Right cardiac atrium (tissue), 5 donors: ENCODE measurements at regions of chr7 and their contacts with region 1.

Region 1: GRCh38 chr7:73612598-73613269 is 11.6 kb downstream of the MLXIPL start:
- DNase-seq: no peak
- ATAC-seq: peak in 1 of 2 donors; percentile 49
- H3K4me3 ChIP-seq: no peak overlapping the region
- H3K27ac ChIP-seq: no peak overlapping the region
- H3K4me1 ChIP-seq: no peaks in the 10 kb centered on the region
- H3K27me3 ChIP-seq: no peaks in the 10 kb centered on the region

Region 2: DNA sequence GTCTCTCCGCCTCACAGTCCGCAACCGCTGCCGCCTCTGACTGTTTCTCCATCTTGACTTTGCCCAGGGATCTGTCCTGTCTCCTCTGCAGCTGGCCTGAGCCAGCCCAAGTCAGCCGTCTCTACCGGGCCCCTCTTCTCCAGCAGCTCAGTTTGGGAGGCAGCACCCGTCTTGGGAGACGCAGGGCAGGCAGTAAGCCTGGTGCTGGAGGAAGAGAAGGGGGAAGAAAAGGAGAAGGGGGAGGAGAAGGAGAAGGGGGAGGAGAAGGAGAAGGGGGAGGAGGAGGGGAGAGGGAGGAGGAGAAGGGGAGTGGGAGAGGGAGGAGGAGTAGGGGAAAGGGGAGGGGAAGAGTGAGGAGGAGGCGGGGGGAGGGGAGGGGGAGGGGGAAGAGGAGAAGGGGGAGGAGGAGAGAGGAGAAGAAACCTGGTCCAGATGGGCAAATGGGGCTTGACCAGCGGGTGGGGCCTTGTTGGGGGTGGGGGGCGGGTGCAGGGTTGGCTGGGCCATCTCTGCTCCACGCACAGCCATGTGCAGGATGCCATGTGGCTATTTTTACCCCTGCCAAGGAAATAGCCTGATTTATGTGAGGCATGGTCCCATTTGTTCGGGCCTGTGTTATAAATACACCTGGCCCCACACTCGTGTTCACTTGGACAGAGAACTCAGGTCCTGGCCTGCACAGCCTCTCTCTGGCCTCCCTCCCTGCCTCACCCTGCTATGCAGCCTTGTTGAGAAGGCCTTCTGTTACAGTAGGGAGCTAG is 215.0 kb before region 1 on chr7:
- intact Hi-C with region 1: no loop called
- DNase-seq: no peak
- ATAC-seq: no peak
- H3K4me3 ChIP-seq: peak overlapping the region; percentile 33
- H3K27ac ChIP-seq: no peak overlapping the region
- H3K4me1 ChIP-seq: no peaks in the 10 kb centered on the region
- H3K27me3 ChIP-seq: no peaks in the 10 kb centered on the region

Region 3: DNA sequence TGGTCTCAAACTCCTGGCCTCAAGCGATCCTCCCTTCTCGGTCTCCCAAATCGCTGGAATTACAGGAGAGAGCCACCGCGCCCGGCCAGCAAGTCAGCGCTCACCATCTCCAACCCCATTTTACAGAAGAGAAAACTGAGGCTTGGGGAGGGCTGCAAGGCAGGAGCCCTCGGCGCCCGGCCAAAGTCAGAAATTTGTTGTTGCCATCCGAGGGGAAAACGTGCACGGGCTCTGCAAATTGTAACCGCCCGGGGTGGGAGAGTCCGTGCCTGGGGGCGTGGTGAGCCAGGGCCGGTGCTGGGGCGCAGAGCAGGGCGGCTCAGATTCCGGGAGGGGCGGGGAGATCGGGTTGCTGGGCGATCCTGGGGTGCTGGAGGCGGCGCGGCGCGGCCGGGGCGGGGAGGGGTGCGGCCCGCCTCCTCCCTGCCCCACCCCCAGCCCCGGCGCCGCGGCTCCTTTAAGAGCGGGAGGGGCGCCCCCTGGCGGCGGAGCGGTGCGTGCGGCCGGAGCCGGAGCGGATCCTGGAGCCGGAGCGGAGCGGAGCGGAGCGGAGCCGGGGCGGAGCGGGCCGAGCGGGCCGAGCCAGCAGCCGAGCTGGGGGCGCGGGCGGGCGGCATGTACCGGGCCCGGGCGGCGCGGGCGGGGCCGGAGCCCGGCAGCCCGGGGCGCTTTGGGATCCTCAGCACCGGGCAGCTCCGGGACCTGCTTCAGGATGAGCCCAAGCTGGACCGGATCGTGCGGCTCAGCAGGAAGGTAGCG is 54.8 kb after region 1 on chr7 and contains the start of gene VPS37D:
- intact Hi-C with region 1: loop called in 2 of 4 experiments (anchors 10 kb)
- DNase-seq: peak; percentile 91 to 97 (median 97)
- ATAC-seq: peak; percentile 96
- H3K4me3 ChIP-seq: peak within 1 kb of the TSS; percentile 96
- H3K27ac ChIP-seq: no peak within 1 kb of the TSS
- H3K4me1 ChIP-seq: no peaks in the 10 kb centered on the region
- H3K27me3 ChIP-seq: no peaks in the 10 kb centered on the region
- total RNA-seq, gene VPS37D: 1.6 to 2.5 (median 2.1) TPM